Activated CD4-positive, alpha-beta T cell treated with anti-CD3 and anti-CD28 coated beads for 36 hours (primary cell): ENCODE measurements at regions of chr5 and their contacts with region 1.

Region 1: GRCh38 chr5:148383564-148384379 is at the start of gene FBXO38:
- DNase-seq: peak; percentile 98
- ATAC-seq: peak; percentile 97
- H3K4me3 Mint-ChIP-seq: peak within 1 kb of the TSS; percentile 94
- H3K27ac Mint-ChIP-seq: peak within 1 kb of the TSS; percentile 99
- H3K4me1 Mint-ChIP-seq: peaks cover 56% of the 10 kb centered on the region
- H3K27me3 Mint-ChIP-seq: no peaks in the 10 kb centered on the region
- total RNA-seq, gene FBXO38: 47.5 to 65.4 TPM

Region 2: DNA sequence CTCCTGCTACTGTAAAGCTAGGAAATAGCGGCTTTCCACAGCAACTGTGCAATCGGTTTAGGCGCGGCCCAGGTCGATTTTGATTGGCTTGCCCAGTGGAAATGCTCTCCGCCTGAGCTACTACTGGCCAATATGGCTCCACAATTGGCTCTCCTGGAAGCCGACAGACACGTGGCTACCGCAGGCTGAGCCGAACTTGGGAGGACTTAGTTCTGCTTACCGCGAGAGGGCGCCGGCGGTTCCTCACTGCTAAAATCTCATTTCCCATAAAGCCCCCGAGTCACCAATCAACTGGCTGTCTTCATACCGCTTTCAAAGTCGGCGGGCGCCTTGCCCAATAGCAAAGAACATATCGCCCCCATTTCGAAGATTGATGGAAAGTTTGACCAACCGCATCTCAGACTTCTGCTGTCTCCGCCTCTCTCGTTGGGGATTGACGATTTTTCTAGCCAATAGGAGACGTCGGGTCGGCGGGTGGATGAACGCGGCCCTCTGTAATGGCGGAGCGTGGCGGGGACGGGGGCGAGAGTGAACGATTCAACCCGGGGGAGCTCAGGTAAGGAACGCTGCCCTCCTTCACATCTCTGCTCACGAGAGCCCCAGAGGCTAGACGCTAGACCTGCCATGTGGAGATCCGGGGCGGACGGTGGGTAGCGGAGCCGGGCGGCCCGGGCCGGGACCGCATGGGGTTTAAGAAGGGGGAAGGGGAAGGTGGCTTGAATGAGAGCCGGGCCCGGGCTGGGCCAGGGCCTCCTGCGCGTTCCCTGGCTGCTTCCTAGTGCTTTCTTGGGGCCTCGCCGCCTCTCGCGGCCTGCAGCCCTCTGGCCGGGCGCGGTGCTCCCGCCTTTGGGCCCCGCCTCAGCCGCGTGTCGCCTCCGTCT is 1936.7 kb before region 1 on chr5 and contains the start of gene TCERG1:
- CTCF ChIA-PET with region 1: no interaction called
- POLR2A ChIA-PET with region 1: no interaction called
- intact Hi-C with region 1: loop called in 1 of 2 experiments (anchors 5 kb)
- DNase-seq: peak; percentile 99
- ATAC-seq: peak; percentile 92
- H3K4me3 Mint-ChIP-seq: peak within 1 kb of the TSS; percentile 100
- H3K27ac Mint-ChIP-seq: peak within 1 kb of the TSS; percentile 100
- H3K4me1 Mint-ChIP-seq: peaks cover 35% of the 10 kb centered on the region
- H3K27me3 Mint-ChIP-seq: no peaks in the 10 kb centered on the region
- total RNA-seq, gene TCERG1: 126 to 132 TPM

Region 3: GRCh38 chr5:148186248-148186996 is 197.3 kb before region 1 on chr5:
- CTCF ChIA-PET with region 1: interaction called, 3 read pairs
- POLR2A ChIA-PET with region 1: no interaction called
- intact Hi-C with region 1: loop called in 1 of 2 experiments (anchors 1 kb)
- DNase-seq: no peak
- ATAC-seq: peak; percentile 99
- H3K4me3 Mint-ChIP-seq: no peak overlapping the region
- H3K27ac Mint-ChIP-seq: no peak overlapping the region
- H3K4me1 Mint-ChIP-seq: peaks cover 11% of the 10 kb centered on the region
- H3K27me3 Mint-ChIP-seq: peaks cover 15% of the 10 kb centered on the region

Region 4: GRCh38 chr5:148708854-148709253 is 325.1 kb after region 1 on chr5:
- CTCF ChIA-PET with region 1: no interaction called
- POLR2A ChIA-PET with region 1: no interaction called
- intact Hi-C with region 1: loop called (anchors 2 to 10 kb)
- DNase-seq: peak; percentile 57
- ATAC-seq: peak; percentile 98
- H3K4me3 Mint-ChIP-seq: no peak overlapping the region
- H3K27ac Mint-ChIP-seq: no peak overlapping the region
- H3K4me1 Mint-ChIP-seq: peaks cover 22% of the 10 kb centered on the region
- H3K27me3 Mint-ChIP-seq: peaks cover 26% of the 10 kb centered on the region

Region 5: DNA sequence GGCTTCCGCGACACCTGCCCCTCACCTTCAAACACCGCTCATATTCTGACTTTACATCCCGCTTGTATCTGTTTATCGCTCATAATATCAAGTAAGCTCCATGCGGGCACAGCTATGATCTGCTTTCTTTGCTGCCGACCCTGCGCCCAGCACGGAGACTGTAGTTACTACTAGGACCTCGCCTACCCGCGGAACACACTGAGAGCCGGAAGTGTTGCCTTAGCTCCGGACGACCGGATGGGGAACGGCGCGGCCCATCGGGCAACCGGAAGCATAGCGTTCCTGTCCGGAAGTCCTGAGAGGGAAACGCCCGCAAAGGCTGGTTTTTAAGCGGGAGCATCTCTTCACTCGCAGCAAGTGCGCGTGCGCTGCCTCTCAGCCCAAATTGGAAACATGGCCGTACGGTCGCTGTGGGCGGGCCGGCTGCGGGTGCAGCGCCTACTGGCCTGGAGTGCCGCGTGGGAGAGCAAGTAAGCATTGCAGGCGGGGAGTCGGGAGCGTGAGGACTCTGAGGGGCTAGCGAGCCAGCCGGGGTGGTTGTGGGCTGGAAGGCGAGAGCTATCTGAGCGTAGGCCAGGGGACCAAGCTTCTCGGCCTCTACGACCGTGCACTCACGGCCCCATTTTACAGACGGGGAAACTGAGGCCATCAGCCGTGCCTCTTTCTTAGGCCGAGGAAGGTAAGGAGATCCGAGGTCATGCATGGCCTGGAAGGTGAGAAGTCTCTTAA is 961.5 kb after region 1 on chr5 and contains the start of gene GRPEL2:
- CTCF ChIA-PET with region 1: no interaction called
- POLR2A ChIA-PET with region 1: no interaction called
- intact Hi-C with region 1: loop called (anchors 1 to 5 kb)
- DNase-seq: peak; percentile 97
- ATAC-seq: peak; percentile 89
- H3K4me3 Mint-ChIP-seq: peak within 1 kb of the TSS; percentile 96
- H3K27ac Mint-ChIP-seq: peak within 1 kb of the TSS; percentile 99
- H3K4me1 Mint-ChIP-seq: peaks cover 49% of the 10 kb centered on the region
- H3K27me3 Mint-ChIP-seq: no peaks in the 10 kb centered on the region
- total RNA-seq, gene GRPEL2: 27.1 to 37.2 TPM